Dorsolateral prefrontal cortex (tissue), 120 donors: ENCODE measurements at regions of chr12 and their contacts with region 1.

Region 1: DNA sequence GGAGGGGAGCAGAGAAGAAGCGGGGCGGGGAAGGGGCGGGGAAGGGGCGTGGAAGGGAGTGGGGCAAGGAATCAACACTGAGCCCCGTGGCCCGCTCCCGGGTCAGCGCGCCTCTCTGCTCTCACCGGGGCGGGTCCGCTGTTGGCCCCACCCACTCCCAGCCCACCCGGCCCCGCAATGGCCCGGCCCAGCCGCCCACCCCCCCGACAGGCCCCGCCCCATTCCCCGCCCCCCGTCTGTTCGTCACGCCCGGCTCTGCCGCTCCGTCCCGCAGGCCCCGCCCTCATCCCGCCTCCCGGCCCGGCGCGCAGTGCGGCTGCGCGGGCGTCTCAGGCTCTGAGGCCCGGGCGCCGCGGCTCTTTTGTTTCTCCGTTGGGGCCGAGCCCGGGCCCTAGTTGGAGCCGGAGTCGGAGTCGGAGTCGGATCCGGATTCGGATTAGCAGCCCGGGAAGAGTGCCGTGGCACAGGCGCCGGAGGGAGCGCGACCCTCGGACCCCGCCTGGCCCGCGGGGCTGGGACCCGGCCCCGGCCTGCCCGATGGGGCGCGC is at the start of gene ULK1:
- DNase-seq: peak; percentile 86 to 97 (median 92)
- H3K4me3 ChIP-seq: peak within 1 kb of the TSS; percentile 54 to 92 (median 71)
- H3K27ac ChIP-seq: peak within 1 kb of the TSS in 58 of 59 donors; percentile 49 to 99 (median 95)
- H3K27me3 ChIP-seq: no peaks in the 10 kb centered on the region
- CTCF ChIP-seq: peak in 5 of 56 donors; percentile 8 to 20 (median 12)
- total RNA-seq, gene ULK1: 43.7 to 169 (median 98.4) TPM

Region 2: DNA sequence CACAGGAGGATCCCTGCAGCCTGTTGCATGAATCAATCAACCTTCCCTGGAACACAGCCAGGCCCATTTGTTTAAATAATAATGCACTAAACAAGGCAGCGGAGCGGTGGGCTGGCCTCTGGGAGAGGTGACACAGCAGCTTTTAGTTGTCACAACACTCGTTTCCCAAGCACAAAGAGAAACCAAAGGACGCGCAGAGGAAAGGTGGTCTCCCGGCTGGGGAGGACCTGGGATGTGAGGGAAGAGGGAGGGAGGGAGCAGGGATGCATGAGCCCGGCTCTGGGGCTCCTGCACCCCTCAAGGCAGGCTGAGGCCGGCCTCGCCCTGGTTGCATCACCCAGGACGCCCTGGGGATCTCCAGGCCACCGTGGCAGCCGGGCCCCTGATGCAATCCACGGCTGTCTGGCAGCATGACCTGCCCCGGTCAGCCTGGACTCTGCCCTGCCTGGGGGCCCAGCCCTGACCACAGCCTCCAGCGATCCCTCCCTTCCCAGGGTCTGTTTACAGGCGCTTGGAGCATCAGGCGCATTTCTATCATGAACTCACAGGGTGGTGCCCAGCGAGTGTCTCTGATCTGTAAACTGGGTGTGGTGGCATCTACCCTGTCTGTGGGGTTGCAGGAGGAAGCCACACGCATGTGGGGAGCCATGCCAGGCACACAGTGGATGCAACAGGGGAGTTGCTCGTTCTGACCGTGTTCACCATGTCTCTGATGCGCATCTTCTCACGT is 33.7 kb before region 1 on chr12:
- intact Hi-C with region 1: no loop called
- DNase-seq: no peak
- H3K4me3 ChIP-seq: no peak overlapping the region
- H3K27ac ChIP-seq: no peak overlapping the region
- H3K27me3 ChIP-seq: peaks cover 0 to 3% (median 0%) of the 10 kb centered on the region in 45 donors
- CTCF ChIP-seq: no peak

Region 3: GRCh38 chr12:131928711-131929580 is 34.6 kb after region 1 on chr12 and contains the start of gene PUS1:
- intact Hi-C with region 1: loop called (anchors 2 kb)
- DNase-seq: peak; percentile 86 to 97 (median 94)
- H3K4me3 ChIP-seq: peak within 1 kb of the TSS; percentile 64 to 95 (median 85)
- H3K27ac ChIP-seq: peak within 1 kb of the TSS in 55 of 59 donors; percentile 20 to 92 (median 80)
- H3K27me3 ChIP-seq: no peaks in the 10 kb centered on the region
- CTCF ChIP-seq: peak in 28 of 56 donors; percentile 5 to 47 (median 20)
- total RNA-seq, gene PUS1: 14.3 to 37.0 (median 24.2) TPM

Region 4: DNA sequence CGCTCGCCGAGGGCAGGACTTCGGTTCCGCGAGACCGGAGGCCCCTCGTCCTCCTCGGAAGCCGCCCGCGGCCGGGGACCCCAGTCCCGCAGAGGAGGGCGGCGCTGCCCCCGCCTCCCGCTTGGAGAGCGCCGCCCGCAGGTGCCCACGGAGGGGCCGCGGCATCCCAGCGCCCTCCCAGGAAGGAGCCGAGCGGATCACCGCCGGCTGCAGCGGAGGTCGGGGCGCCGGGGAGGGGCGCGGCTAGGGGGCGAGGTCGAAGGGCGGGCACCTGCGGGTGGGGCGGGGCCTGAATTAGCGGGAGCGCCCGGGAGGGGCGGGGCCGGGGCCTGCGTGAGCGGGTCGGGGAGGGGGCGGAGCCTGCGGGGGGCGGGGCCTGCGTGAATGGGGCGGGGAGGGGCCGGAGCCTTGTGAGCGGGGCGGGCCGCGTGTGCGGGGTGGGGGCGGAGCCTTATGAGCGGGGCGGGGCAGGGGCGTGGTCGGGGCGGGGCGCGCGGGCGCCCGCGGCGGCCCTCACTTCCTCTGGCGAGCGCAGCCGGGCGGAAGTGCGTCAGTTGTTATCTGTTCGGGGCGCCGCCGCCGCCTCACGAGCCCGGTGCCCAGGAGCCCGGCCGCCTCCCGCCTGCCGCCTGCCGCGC is 595.3 kb after region 1 on chr12 and contains the start of gene FBRSL1:
- intact Hi-C with region 1: loop called in 1 of 2 experiments (anchors 10 kb)
- DNase-seq: peak; percentile 83 to 90 (median 88)
- H3K4me3 ChIP-seq: peak within 1 kb of the TSS; percentile 55 to 86 (median 76)
- H3K27ac ChIP-seq: peak within 1 kb of the TSS in 55 of 59 donors; percentile 20 to 89 (median 78)
- H3K27me3 ChIP-seq: no peaks in the 10 kb centered on the region
- CTCF ChIP-seq: no peak
- total RNA-seq, gene FBRSL1: 41.4 to 125 (median 65.3) TPM